Heart left ventricle (tissue), 16 donors: ENCODE measurements at regions of chr11 and their contacts with region 1.

Region 1: GRCh38 chr11:250740-251299 is 14.0 kb downstream of the PSMD13 start:
- DNase-seq: peak; percentile 39 to 75 (median 54)
- ATAC-seq: peak; percentile 33 to 84 (median 77)
- H3K4me3 ChIP-seq: no peak overlapping the region
- H3K27ac ChIP-seq: no peak overlapping the region
- H3K4me1 ChIP-seq: no peaks in the 10 kb centered on the region
- H3K27me3 ChIP-seq: no peaks in the 10 kb centered on the region
- CTCF ChIP-seq: peak; percentile 40 to 69 (median 56)
- POLR2A ChIP-seq: no peak

Region 2: DNA sequence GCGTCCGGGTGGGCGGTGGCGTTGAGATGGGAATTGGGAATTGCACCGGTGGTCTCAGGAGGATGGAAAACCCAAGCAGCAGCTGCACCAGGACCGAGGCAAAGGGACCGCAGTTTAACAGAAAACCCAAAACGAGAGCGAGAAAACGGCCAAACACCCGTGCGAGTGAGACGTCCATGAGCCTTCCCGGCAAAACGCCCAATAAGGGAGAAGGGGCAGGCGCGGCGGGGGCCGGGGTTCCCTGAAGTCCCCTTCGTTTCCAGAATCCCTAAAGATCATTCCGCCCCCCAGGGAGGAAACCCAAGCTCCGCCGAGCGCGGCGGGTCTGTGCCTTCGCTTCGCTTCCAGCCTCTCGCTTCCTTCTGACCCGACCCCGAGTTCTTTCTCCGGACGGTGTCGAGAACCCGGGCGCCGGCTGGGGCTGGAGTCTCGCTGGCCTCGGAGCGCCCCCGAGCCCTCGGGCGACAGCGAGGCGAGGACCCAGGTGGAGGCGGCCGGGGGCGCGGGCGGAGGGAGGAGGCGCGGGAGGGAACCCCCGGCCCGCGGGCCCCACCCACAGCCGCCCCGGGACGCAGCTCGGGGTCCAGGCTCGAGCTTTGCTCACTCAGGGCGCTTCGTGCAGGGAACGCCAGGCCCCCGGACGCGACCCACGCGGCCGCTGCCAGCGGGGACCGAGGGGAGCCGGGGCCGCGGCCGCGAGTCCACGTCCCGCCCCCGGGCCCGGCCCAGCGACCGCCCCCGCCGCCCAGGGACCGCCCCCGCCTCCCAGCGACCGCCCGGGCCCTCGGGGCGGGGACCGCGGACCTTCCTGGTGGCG is 37.7 kb after region 1 on chr11 and contains the start of gene PGGHG:
- intact Hi-C with region 1: loop called in 1 of 10 experiments (anchors 5 kb)
- DNase-seq: peak in 4 of 5 donors; percentile 87 to 94 (median 88)
- ATAC-seq: peak in 2 of 4 donors; percentile 88 to 90
- H3K4me3 ChIP-seq: peak within 1 kb of the TSS; percentile 61 to 92 (median 78)
- H3K27ac ChIP-seq: peak within 1 kb of the TSS in 11 of 12 donors; percentile 57 to 83 (median 71)
- H3K4me1 ChIP-seq: peaks cover 0 to 24% (median 12%) of the 10 kb centered on the region in 12 donors
- H3K27me3 ChIP-seq: peaks cover 0 to 37% (median 19%) of the 10 kb centered on the region in 9 donors
- CTCF ChIP-seq: no peak
- POLR2A ChIP-seq: peak in 1 of 2 donors; percentile 21
- total RNA-seq, gene PGGHG: 4.5 to 11.1 (median 6.2) TPM

Region 3: DNA sequence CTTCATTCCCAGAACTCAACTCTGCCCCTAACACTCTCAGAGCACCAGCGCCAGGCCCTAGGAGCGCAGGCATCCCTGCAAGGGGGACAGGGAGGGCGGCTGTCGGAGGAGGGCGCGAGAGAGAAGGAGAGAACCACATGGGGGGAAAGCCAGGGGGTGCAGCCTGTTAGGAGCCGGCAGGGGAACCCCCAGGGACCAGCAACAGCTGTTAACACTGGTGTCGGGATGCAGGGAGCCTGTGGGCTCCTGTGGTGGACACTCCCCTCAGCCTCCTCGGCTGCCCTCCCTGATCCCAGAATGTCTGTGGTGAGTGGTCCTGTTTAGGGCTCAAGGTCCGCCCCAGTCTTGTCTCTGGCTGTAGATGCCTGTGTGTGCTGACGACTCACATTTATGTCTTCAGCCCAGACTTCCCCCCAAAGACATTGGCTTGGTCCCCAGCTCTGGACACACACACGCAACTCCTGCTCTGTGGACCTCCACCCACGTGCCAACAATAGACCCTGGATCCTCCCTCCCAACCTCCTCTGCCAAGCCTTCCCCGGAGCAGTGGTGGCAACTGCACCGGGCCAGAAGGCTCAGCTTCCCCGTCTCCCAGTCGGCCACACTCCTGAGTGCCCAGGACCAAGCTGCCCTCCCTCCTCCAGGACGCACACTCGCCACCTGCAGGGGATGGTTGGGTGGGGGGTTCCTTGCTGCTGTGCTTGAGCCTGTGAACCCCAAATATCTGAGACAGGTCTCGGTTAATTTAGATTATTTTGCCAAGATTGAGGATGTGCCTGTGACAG is 49.3 kb after region 1 on chr11:
- intact Hi-C with region 1: loop called in 1 of 10 experiments (anchors 2 kb)
- DNase-seq: peak in 3 of 5 donors; percentile 26 to 48 (median 37)
- ATAC-seq: no peak
- H3K4me3 ChIP-seq: no peak overlapping the region
- H3K27ac ChIP-seq: no peak overlapping the region
- H3K4me1 ChIP-seq: peaks cover 0 to 19% (median 3%) of the 10 kb centered on the region in 12 donors
- H3K27me3 ChIP-seq: peaks cover 4 to 47% (median 17%) of the 10 kb centered on the region in 9 donors
- CTCF ChIP-seq: peak in 2 of 12 donors; percentile 14 to 19
- POLR2A ChIP-seq: no peak

Region 4: GRCh38 chr11:350723-351255 is 100.0 kb after region 1 on chr11:
- intact Hi-C with region 1: no loop called
- DNase-seq: peak in 1 of 5 donors; percentile 34
- ATAC-seq: no peak
- H3K4me3 ChIP-seq: no peak overlapping the region
- H3K27ac ChIP-seq: peak overlapping the region in 1 of 12 donors; percentile 59
- H3K4me1 ChIP-seq: peaks cover 7 to 47% (median 30%) of the 10 kb centered on the region in 12 donors
- H3K27me3 ChIP-seq: no peaks in the 10 kb centered on the region
- CTCF ChIP-seq: no peak
- POLR2A ChIP-seq: no peak

Region 5: GRCh38 chr11:363948-364761 is 113.3 kb after region 1 on chr11:
- intact Hi-C with region 1: loop called in 2 of 10 experiments (anchors 5 kb)
- DNase-seq: no peak
- ATAC-seq: peak in 3 of 4 donors; percentile 23 to 46 (median 24)
- H3K4me3 ChIP-seq: no peak overlapping the region
- H3K27ac ChIP-seq: no peak overlapping the region
- H3K4me1 ChIP-seq: peaks cover 0 to 11% (median 6%) of the 10 kb centered on the region in 12 donors
- H3K27me3 ChIP-seq: peaks cover 11 to 62% (median 42%) of the 10 kb centered on the region in 9 donors
- CTCF ChIP-seq: peak in 1 of 12 donors; percentile 19
- POLR2A ChIP-seq: no peak

Region 6: GRCh38 chr11:369336-370018 is 118.7 kb after region 1 on chr11 and contains the start of gene B4GALNT4:
- intact Hi-C with region 1: loop called in 3 of 10 experiments (anchors 5 to 10 kb)
- DNase-seq: no peak
- ATAC-seq: peak in 1 of 4 donors; percentile 19
- H3K4me3 ChIP-seq: peak within 1 kb of the TSS in 8 of 12 donors; percentile 8 to 41 (median 24)
- H3K27ac ChIP-seq: no peak within 1 kb of the TSS
- H3K4me1 ChIP-seq: peaks cover 0 to 12% (median 6%) of the 10 kb centered on the region in 12 donors
- H3K27me3 ChIP-seq: peaks cover 11 to 57% (median 43%) of the 10 kb centered on the region in 9 donors
- CTCF ChIP-seq: no peak
- POLR2A ChIP-seq: no peak
- total RNA-seq, gene B4GALNT4: 0.28 to 1.9 (median 0.67) TPM in 7 of 9 donors, not detected in the others